PC-9 (cell line): ENCODE measurements at regions of chr1 and their contacts with region 1.

Region 1: DNA sequence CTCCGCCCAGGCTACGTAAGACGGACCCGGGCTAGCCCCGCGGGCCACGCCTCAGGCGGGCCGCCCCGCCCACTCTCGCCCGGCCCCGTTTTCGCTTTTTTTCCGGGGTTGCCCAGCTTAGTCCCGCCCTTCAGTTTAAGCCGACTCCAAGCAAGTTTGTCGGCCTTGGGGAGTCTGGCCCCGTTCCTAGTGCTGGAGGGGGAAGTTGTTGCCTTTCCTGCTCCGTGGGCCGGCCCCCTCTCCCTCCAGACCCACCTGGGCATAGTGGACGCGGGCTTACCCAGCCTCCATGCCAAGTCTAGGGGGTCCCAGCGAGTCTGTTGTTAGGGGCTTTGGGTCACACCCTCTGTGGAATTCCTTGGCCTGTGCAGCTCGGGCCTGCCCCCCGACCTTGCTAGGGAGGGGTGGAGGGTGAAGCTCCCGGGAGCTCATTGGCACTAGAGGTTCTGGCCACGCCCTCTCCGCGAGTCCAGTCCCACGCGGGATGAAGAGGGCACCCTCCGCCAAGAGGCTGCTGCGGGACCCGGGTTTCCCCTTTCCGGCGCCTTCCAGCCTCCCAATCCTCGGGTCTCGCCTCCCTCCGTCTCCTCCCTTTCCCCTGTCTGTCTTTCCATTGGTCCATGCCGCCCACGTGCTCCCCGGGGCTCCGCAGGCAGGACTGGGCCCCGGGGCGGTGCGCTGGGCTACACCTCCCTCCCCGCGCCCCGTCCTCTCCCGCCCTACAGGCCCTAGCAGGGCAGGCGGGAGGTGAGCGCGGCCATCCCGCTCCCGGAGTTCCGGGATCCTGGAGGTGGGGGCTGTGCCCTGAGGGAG is 3.3 kb downstream of the RUSC1 start:
- DNase-seq: peak; percentile 86 to 96
- H3K4me3 ChIP-seq: peak overlapping the region; percentile 96
- H3K27ac ChIP-seq: peak overlapping the region; percentile 49
- H3K4me1 ChIP-seq: peaks cover 9% of the 10 kb centered on the region; the same call in 1 of the 2 replicates
- H3K27me3 ChIP-seq: no peaks in the 10 kb centered on the region
- CTCF ChIP-seq: no peak

Region 2: DNA sequence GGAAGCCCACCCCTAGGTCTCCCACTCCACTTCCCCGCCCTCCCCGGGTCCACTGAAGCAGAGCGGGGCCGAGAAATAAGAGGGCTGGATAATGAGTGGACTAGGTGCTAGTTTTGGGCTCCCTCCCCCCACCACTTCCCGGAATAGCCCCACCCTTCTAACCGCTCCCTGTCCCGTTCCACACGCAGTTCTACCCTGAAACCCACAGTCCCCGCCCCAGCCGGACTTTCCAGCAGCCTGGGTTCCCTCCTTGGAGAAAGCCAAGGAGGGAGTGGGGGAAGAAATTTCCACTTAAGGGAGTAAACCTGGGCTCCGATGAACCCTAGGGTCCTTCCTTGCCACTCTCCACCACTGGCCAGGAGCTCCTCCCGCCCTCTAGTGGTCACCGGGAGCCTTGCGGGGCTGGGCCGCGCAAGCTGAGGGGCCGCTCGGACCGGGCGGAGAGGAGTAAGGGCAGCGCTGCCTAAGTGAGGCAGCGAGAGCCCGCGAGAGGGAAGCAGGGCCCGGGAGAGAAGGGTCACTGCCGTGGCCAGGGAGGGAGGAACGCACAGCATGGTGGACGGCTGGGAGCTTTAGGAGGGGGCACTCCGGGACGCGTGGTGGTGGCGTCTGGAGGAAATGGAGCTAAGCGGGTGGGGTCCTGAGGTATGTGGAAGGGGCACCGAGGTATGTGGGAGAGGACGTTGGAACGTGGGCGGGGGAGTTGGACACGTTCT is 130.6 kb before region 1 on chr1:
- CTCF ChIA-PET with region 1: no interaction called
- POLR2A ChIA-PET with region 1: interaction called, 12 read pairs
- intact Hi-C with region 1: loop called (anchors 5 kb)
- DNase-seq: peak; percentile 79 to 96
- H3K4me3 ChIP-seq: peak overlapping the region; percentile 73
- H3K27ac ChIP-seq: peak overlapping the region; percentile 59
- H3K4me1 ChIP-seq: peaks cover 14% of the 10 kb centered on the region
- H3K27me3 ChIP-seq: no peaks in the 10 kb centered on the region
- CTCF ChIP-seq: peak; percentile 97

Region 3: DNA sequence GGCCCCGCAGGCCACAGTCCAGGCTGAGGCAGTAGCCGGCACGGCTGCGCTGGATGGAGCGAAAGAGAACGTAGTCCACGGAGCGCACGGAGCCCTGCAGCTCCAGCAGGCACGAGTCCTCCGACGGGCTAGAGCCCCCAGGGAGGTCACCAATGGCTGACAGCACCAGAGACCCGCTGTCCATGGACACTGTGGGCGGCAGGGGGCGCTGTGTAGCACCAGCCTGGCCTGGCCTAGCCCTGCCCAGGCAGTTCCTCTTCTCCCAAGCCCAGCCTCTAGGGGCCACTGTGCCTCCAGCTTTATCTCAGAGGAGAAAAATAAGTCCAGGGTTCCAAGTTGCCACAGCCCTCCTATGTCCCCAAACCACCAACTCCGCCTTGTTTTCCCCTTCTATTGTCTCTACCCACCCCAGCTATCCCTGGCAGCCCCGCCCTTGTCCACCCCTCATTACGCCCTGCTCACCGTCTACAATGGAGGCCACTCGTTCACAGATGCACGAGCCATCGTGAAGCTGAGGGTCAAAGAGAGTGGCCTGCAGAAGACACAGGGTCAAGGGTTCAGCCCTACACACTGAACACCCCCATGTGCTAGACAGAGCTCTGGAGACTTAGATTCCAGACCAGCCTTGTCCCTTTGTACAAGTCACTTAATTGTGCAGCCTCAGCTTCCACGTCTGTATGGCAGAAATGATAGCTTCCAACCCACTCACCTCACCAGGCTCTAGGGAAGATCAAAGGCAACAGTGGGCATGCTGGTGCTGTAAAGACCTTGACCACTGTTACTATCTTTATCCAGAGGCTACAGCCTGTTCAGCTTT is 73.2 kb before region 1 on chr1:
- CTCF ChIA-PET with region 1: interaction called, 12 read pairs
- POLR2A ChIA-PET with region 1: no interaction called
- intact Hi-C with region 1: loop called (anchors 2 kb)
- DNase-seq: peak; percentile 70 to 88
- H3K4me3 ChIP-seq: no peak overlapping the region
- H3K27ac ChIP-seq: no peak overlapping the region
- H3K4me1 ChIP-seq: peaks cover 13% of the 10 kb centered on the region
- H3K27me3 ChIP-seq: no peaks in the 10 kb centered on the region
- CTCF ChIP-seq: peak; percentile 96

Region 4: DNA sequence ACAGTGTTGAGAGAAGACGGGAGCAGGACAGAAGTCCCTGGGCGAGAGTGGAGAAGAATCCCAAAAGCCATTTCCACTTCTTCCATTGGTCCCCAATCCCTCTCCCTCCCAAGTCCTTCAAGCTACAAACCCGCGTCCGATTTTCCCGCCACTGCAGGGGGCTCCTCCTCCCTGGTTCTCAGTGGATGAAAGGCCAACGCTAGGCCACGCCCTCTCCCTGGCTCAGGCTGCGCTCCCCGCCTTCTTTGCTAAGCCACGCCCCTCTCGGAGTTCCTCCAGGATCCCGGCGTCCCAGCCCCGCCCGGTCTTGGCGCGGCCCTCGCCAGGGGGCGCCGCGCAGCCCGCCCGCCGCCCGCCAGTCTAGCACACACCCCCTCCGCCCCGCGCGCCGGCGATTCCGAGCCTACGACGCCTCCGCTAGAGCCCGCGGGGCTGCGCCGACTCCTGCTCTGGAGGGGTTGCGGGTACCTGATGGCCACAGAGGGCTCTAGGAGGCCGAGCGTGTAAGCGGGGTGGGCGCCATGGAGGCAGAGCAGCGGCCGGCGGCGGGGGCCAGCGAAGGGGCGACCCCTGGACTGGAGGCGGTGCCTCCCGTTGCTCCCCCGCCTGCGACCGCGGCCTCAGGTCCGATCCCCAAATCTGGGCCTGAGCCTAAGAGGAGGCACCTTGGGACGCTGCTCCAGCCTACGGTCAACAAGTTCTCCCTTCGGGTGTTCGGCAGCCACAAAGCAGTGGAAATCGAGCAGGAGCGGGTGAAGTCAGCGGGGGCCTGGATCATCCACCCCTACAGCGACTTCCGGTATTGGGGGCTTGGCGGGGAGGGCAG is 46.7 kb before region 1 on chr1 and contains the start of gene HCN3:
- CTCF ChIA-PET with region 1: no interaction called
- POLR2A ChIA-PET with region 1: interaction called, 3 read pairs
- intact Hi-C with region 1: loop called (anchors 2 kb)
- DNase-seq: peak; percentile 85 to 97
- H3K4me3 ChIP-seq: peak within 1 kb of the TSS; percentile 96
- H3K27ac ChIP-seq: no peak within 1 kb of the TSS
- H3K4me1 ChIP-seq: peaks cover 13% of the 10 kb centered on the region
- H3K27me3 ChIP-seq: no peaks in the 10 kb centered on the region
- CTCF ChIP-seq: peak; percentile 68; the same call in 1 of the 2 replicates
- total RNA-seq, gene HCN3: 6.6 and 7.5 TPM in 2 replicates